ENCODE measurements at regions of chr12 and their contacts with region 1.

Region 1: GRCh38 chr12:22100958-22101748 is 55.1 kb downstream of the CMAS start:
- DNase-seq: peak; percentile 31
- CTCF ChIP-seq: peak; percentile 55

Region 2: DNA sequence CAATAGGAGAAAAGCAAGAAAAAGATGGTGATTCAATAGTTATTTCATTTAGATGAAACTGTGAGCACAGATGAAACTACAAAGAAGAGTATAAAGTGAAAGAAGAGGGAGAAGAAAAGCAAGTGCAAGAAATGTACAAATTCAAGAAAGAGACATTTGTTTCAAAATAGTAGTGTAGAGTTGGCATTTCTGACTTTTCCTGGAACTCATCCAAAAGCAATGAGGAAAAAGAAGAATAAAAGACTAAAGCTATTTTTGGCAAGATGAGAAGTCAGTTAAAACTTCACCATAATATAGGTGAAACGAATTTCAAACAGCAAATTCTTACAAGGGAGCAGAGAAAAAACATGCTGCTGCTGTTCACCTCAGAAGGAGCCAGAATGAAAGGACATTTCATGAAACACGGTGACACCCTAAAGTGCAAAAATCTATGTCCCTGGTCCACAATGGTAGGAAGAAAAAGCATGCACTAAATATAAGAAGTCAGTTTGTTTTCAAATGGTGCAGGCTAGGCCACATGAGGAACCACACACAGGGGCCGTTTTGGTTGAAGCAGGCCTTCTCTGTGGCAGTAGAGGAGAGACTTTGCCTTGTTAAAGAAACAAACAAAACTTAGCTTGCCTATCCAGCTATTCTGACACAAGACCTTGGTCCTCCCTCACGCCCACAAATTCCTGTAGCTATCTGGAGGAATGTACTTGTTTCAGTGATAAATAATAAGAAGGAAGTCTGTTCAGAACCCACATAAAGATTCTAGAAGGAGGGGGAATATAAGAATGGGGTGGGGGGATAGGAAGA is 66.2 kb before region 1 on chr12:
- CTCF ChIA-PET with region 1: no interaction called
- POLR2A ChIA-PET with region 1: no interaction called
- DNase-seq: no peak
- CTCF ChIP-seq: no peak

Region 3: DNA sequence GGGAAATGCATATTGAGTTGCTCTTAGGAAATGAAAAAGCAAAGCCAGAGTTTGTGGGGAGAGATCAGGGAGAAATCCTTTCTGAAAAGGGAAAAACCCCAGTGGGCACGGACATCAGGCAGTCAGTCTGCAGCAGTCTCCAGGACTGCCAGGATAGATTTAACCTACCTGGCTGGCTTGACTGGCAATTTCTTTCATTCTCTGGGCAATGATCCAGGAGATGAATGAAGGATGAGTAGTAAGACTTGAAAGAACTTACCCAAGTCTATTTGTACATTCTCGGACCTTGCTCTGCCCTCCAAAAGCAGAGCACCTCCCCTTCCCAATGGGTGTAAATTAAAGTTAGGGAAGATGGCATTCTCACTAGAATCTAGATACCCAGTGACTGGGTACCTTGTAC is 12.3 kb before region 1 on chr12:
- CTCF ChIA-PET with region 1: interaction called, 11 read pairs
- POLR2A ChIA-PET with region 1: no interaction called
- DNase-seq: no peak
- CTCF ChIP-seq: no peak

Region 4: GRCh38 chr12:22121227-22121626 is 20.1 kb after region 1 on chr12:
- CTCF ChIA-PET with region 1: interaction called, 26 read pairs
- POLR2A ChIA-PET with region 1: no interaction called
- DNase-seq: peak; percentile 24
- CTCF ChIP-seq: peak; percentile 56

Region 5: DNA sequence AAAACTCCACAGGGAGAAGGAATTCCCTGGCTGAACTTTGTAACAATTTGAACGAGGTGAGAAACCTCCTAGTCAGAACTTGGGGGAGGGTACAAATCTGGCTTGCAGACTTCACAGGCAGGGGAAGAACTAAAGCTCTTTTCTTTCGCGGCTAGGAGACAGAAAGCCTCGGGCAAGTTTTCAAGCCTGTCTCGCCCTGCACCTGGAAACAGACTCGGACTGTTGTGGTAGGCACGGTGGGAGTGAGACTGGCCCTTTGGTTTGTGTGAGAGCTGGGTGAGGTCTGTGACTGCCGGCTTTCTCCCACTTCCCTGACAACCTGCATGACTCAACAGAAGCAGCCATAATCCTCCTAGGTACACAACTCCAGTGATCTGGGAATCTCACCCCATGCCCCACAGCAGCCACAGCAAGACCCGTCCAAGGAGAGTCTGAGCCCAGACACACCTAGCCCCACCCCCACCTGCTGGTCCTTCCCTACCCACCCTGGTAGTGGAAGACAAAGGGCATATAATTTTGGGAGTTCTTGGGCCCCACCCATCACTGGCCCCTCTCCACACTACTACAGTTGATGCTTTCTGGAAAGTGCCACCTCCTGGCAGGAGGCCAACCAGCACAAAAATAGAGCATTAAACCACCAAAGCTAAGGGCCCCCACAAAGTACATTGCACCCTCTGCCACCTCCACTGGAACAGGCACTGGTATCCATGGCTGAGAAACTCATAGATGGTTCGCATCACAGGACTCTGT is 336.1 kb after region 1 on chr12:
- CTCF ChIA-PET with region 1: interaction called, 21 read pairs
- POLR2A ChIA-PET with region 1: no interaction called
- DNase-seq: no peak
- CTCF ChIP-seq: no peak

Region 6: DNA sequence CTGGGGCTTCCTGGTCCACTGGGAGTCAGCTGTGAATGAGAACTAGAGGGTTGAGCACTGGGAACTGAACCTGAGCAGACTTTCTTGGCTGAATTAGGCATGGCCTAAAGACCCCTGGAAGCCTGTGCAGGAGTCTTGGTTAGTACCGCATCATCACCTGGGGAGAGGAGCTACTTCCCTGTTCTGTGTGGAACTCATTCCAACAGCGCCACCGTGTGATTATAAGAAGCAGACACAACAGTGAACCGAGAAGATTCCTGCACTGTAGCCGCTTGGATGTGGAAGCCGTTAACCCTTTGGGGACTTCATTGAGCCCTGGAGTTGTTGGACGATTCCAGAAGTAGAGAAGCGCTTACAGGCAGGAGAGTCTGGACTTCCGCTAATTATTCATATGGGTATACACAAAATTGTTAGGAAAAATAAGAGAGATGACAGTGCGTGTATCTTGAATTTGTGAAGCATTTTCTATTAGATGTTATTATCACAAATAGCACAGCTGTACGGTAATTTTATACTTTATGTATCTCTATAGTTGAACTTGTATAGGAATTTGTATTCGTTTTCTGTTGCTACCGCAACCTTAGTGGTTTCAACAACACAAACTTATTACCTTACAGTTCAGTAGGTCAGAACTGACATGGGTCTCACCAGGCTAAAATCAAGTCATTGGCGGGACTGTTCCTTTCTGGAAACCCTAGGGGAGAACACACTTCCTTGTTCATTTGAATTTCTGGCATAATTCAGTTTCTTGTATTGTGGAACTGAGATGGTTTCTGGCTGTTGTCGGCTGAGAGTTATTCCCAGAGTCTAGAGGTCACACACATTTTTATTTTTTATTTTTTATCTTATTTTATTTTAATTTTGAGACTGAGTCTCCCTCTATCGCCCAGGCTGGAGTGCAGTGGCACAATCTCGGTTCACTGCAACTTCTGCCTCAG is 342.5 kb after region 1 on chr12:
- CTCF ChIA-PET with region 1: interaction called, 21 read pairs
- POLR2A ChIA-PET with region 1: no interaction called
- DNase-seq: peak; percentile 62
- CTCF ChIP-seq: peak; percentile 80

Region 7: GRCh38 chr12:22459838-22460490 is 358.8 kb after region 1 on chr12:
- CTCF ChIA-PET with region 1: interaction called, 24 read pairs
- POLR2A ChIA-PET with region 1: no interaction called
- DNase-seq: peak; percentile 17
- CTCF ChIP-seq: peak; percentile 56